Activated CD4-positive, alpha-beta T cell treated with anti-CD3 and anti-CD28 coated beads for 36 hours (primary cell): ENCODE measurements at regions of chr17 and their contacts with region 1.

Region 1: DNA sequence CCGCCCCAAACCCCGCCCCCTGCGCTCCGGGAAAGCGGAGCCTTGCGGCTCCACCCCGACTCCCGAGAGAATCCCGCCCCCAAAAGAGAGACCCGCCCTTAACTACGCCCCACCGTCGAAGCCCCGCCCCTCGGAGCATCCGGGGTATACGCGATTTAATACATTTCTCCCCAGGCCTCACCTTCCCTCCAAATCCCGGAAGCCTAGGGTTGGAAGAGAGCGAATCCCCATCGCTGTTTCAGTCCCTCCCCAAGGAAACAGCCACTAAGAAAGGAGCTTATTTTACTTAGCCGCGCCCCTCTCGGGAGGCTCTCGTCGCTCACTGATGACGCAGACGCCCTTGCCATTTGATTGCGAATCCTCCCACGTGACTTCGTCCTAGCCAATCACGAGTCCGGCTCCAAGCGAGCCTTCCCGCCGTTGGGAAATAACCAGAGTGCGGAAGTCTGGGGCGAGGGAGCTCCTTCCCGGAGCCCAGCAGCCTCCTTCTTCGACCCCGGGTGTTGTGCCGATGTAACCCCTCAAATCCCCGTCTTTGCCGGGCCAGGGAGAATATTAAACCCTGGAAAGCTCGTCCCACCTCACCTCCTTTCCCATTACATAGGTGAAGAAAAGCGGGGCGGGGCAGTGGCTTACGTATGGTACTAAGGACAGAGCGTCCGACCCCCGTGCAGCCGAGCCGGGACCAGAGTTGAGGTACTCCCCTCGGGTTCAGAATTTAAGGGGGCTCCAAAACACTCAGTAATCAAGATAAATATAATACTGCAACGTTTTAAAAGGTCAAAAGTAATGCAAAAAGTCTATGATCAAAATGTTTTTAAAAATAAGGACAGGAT is 462 bp upstream of the FDXR start:
- DNase-seq: peak; percentile 100
- ATAC-seq: peak; percentile 97
- H3K4me3 Mint-ChIP-seq: peak overlapping the region; percentile 88
- H3K27ac Mint-ChIP-seq: peak overlapping the region; percentile 98
- H3K4me1 Mint-ChIP-seq: peaks cover 22% of the 10 kb centered on the region
- H3K27me3 Mint-ChIP-seq: no peaks in the 10 kb centered on the region

Region 2: GRCh38 chr17:74748529-74749365 is 124.5 kb before region 1 on chr17 and contains the start of gene NHERF1:
- CTCF ChIA-PET with region 1: interaction called, 5 read pairs
- POLR2A ChIA-PET with region 1: interaction called, 7 read pairs
- intact Hi-C with region 1: loop called (anchors 1 kb)
- DNase-seq: peak; percentile 97
- ATAC-seq: peak; percentile 90
- H3K4me3 Mint-ChIP-seq: peak within 1 kb of the TSS; percentile 98
- H3K27ac Mint-ChIP-seq: peak within 1 kb of the TSS; percentile 91
- H3K4me1 Mint-ChIP-seq: peaks cover 56% of the 10 kb centered on the region
- H3K27me3 Mint-ChIP-seq: no peaks in the 10 kb centered on the region
- total RNA-seq, gene NHERF1: 115 to 170 TPM

Region 3: DNA sequence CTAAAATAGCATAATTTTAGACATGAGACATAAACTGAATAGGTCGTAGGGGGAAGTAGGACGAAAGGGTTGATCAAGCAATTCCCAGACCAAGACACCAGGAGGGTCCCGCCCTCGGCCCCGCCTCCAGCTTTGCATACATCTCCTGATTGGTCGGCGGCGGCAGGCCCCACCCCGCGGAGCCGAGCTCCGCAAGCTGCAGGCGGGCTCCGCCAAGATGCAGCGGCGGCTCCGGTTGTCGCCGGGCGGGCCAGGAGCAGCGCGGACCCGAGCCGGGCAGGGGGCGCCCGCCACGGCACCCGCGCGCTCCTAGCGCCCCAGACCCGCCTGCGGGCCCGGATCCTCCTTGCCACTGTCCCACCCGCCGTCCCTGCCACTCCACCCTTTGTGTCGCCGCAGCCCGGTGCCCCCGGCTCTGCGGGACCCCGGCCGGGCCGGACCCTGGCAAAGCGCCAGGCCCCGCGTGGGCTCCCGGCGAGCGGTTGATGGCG is 114.2 kb after region 1 on chr17 and contains the start of gene CDR2L:
- CTCF ChIA-PET with region 1: no interaction called
- POLR2A ChIA-PET with region 1: interaction called, 4 read pairs
- intact Hi-C with region 1: loop called in 1 of 2 experiments (anchors 1 kb)
- DNase-seq: peak; percentile 95
- ATAC-seq: peak; percentile 98
- H3K4me3 Mint-ChIP-seq: peak within 1 kb of the TSS; percentile 73
- H3K27ac Mint-ChIP-seq: no peak within 1 kb of the TSS
- H3K4me1 Mint-ChIP-seq: peaks cover 9% of the 10 kb centered on the region
- H3K27me3 Mint-ChIP-seq: peaks cover 10% of the 10 kb centered on the region
- total RNA-seq, gene CDR2L: 0.89 to 0.91 TPM

Region 4: DNA sequence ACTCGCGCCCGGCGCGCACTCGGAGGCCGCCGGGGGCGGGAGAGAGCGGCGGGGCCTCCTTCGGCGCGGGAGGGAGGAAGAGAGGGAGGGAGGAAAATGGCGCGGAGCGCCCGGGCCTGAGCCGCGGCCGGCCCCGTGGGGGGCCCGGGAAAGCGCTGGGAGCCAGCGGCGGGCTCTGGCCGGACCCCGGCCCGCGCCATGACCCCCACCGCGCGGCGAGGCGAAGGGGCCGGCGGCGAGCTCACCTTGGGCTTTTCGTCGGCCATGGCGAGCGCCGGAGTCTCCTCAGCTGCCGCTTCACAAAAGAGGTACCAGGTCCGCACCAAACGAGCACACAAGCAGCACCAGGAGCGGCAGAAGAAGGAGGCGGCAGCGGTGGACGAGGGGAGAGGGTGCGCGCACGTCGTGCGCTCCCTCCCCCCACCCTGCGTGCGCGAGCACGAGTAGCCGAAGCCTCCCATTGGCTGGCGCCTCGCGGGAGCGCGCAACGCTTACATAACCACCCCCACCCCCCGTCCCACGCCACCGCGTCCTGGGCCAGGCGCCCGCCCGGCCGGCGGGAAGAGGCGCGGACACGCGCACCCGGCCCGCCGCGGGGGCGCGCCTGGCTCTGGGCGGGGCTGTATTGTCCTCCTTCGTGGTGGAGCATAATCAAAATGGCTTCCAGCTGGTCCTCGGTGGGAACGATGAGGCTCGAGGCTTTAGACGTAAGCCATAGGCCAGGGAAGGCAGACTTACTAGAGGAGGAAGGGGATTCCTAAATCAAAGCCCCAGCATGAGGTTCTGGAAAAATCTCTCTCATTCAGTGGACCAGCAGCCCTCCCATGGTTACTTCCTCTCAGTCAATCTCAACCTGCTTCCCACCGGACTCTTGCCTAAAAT is 309.6 kb after region 1 on chr17 and contains the start of gene SUMO2:
- CTCF ChIA-PET with region 1: no interaction called
- POLR2A ChIA-PET with region 1: no interaction called
- intact Hi-C with region 1: loop called in 1 of 2 experiments (anchors 1 kb)
- DNase-seq: peak; percentile 98
- ATAC-seq: peak; percentile 85
- H3K4me3 Mint-ChIP-seq: peak within 1 kb of the TSS; percentile 97
- H3K27ac Mint-ChIP-seq: peak within 1 kb of the TSS; percentile 96
- H3K4me1 Mint-ChIP-seq: peaks cover 45% of the 10 kb centered on the region
- H3K27me3 Mint-ChIP-seq: no peaks in the 10 kb centered on the region
- total RNA-seq, gene SUMO2: 594 to 727 TPM

Region 5: GRCh38 chr17:75405365-75406221 is 532.3 kb after region 1 on chr17 and contains the start of gene GRB2:
- CTCF ChIA-PET with region 1: interaction called, 4 read pairs
- POLR2A ChIA-PET with region 1: no interaction called
- intact Hi-C with region 1: loop called in 1 of 2 experiments (anchors 1 kb)
- DNase-seq: peak; percentile 100
- ATAC-seq: peak; percentile 81
- H3K4me3 Mint-ChIP-seq: peak within 1 kb of the TSS; percentile 90
- H3K27ac Mint-ChIP-seq: peak within 1 kb of the TSS; percentile 96
- H3K4me1 Mint-ChIP-seq: peaks cover 35% of the 10 kb centered on the region
- H3K27me3 Mint-ChIP-seq: no peaks in the 10 kb centered on the region
- total RNA-seq, gene GRB2: 157 to 168 TPM

Region 6: GRCh38 chr17:75589012-75589918 is 716.0 kb after region 1 on chr17:
- CTCF ChIA-PET with region 1: no interaction called
- POLR2A ChIA-PET with region 1: no interaction called
- intact Hi-C with region 1: loop called in 1 of 2 experiments (anchors 2 kb)
- DNase-seq: peak; percentile 99
- ATAC-seq: peak; percentile 90
- H3K4me3 Mint-ChIP-seq: peak overlapping the region; percentile 72
- H3K27ac Mint-ChIP-seq: peak overlapping the region; percentile 42
- H3K4me1 Mint-ChIP-seq: no peaks in the 10 kb centered on the region
- H3K27me3 Mint-ChIP-seq: peaks cover 2% of the 10 kb centered on the region